ENCODE measurements at regions of chr4 and their contacts with region 1.

Region 1: GRCh38 chr4:25986807-25987206 is 72.8 kb downstream of the SMIM20 start:
- DNase-seq: no peak
- H3K4me3 Mint-ChIP-seq: no peak overlapping the region
- H3K27ac Mint-ChIP-seq: no peak overlapping the region
- H3K4me1 Mint-ChIP-seq: peaks cover 6% of the 10 kb centered on the region
- H3K27me3 Mint-ChIP-seq: no peaks in the 10 kb centered on the region

Region 2: GRCh38 chr4:25842229-25842845 is 144.5 kb before region 1 on chr4:
- CTCF ChIA-PET with region 1: interaction called, 6 read pairs
- intact Hi-C with region 1: loop called (anchors 5 kb)
- DNase-seq: peak; percentile 65
- H3K4me3 Mint-ChIP-seq: no peak overlapping the region
- H3K27ac Mint-ChIP-seq: no peak overlapping the region
- H3K4me1 Mint-ChIP-seq: peaks cover 40% of the 10 kb centered on the region
- H3K27me3 Mint-ChIP-seq: no peaks in the 10 kb centered on the region

Region 3: GRCh38 chr4:26000274-26000950 is 13.6 kb after region 1 on chr4:
- CTCF ChIA-PET with region 1: interaction called, 23 read pairs
- intact Hi-C with region 1: no loop called
- DNase-seq: no peak
- H3K4me3 Mint-ChIP-seq: no peak overlapping the region
- H3K27ac Mint-ChIP-seq: no peak overlapping the region
- H3K4me1 Mint-ChIP-seq: no peaks in the 10 kb centered on the region
- H3K27me3 Mint-ChIP-seq: peaks cover 5% of the 10 kb centered on the region

Region 4: DNA sequence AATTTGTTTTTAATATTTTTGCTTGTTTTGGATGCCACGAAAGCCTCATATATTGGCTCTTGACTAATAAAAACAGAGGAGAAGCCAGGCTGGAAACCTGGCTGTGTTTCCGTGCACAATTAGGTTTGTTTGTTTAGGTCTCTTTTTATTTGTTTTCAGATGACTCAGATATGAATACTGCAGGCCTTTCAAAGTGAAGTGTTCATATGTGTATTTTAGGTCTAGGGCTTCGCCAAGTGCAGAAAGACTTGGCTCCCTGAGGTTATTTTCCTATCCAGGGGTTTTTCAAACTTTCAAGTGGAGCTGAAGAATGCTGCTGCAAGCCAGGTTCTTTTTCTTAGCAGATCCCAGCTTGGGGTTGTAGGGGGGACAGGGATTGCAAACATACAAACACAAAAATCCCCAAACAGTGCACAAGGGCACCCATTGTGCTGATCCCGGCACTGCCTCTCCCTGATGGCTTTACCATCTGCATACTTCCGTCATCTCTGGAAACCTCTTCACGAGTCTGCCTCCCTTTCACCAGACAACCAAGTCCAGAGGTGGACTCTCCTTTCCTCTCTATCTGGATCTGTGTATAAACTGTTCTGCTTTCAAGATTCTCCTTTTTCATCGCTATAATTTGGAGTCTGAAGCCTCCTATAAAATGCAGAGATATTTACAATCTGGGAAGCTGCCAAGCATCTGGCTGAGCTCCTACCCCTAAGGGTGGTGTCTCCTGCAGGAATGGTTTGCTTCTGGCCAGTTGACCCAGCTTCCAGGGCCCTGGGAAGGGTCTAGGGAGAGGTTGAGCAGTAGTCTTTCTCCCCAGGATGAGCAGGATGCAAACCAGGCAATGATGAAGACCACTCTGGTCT is 35.8 kb after region 1 on chr4:
- CTCF ChIA-PET with region 1: no interaction called
- intact Hi-C with region 1: no loop called
- DNase-seq: no peak
- H3K4me3 Mint-ChIP-seq: no peak overlapping the region
- H3K27ac Mint-ChIP-seq: no peak overlapping the region
- H3K4me1 Mint-ChIP-seq: no peaks in the 10 kb centered on the region
- H3K27me3 Mint-ChIP-seq: peaks cover 19% of the 10 kb centered on the region

Region 5: DNA sequence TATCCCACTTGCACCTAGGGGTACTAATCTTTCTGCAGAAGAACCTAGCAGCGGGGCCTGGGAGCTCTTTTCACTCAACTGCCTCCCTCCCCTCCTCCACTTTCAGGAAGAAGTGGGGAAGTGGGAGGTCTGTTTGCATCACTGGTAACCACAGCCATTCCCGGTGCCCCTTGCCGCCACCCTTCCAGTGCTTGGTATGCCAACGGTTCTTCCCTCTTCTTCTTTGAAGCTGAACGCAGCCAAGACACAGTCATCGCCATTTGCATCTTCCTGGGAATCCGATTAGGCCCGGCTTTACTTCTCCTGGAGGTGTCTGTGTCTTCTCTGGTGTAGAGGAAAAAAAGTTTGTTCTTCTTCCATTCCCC is 286.8 kb after region 1 on chr4:
- CTCF ChIA-PET with region 1: no interaction called
- intact Hi-C with region 1: no loop called
- DNase-seq: no peak
- H3K4me3 Mint-ChIP-seq: no peak overlapping the region
- H3K27ac Mint-ChIP-seq: no peak overlapping the region
- H3K4me1 Mint-ChIP-seq: peaks cover 21% of the 10 kb centered on the region
- H3K27me3 Mint-ChIP-seq: peaks cover 2% of the 10 kb centered on the region

Region 6: DNA sequence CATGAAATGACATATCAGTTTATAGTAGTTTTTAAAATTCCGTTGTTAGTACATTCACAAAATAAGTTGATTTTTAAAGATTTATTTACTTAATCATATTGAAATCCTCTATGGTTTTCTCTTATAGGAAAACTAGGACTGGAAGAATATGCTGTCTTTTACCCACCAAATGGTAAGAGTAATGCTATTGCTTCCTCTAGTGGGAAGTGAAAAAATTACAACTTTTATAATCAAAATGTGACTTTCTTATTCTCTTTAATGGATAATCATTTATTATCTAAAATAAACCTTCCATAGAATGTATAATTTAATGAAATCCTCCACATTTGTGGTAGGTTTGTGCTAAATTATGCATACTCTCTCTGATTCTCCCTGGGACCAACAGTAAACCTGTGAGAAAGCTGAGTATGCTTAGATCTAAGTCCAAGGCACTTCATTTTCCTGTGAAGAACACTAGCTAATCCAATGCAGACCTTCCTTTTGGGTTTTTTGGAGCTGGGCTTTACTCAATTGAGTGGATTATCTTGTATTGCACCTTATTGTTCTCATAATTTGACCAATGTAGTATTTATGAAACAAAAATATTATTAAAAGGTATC is 733.2 kb after region 1 on chr4:
- CTCF ChIA-PET with region 1: no interaction called
- intact Hi-C with region 1: loop called (anchors 5 kb)
- DNase-seq: no peak
- H3K4me3 Mint-ChIP-seq: no peak overlapping the region
- H3K27ac Mint-ChIP-seq: no peak overlapping the region
- H3K4me1 Mint-ChIP-seq: peaks cover 10% of the 10 kb centered on the region
- H3K27me3 Mint-ChIP-seq: no peaks in the 10 kb centered on the region